ENCODE measurements at regions of chr5 and their contacts with region 1.

Region 1: DNA sequence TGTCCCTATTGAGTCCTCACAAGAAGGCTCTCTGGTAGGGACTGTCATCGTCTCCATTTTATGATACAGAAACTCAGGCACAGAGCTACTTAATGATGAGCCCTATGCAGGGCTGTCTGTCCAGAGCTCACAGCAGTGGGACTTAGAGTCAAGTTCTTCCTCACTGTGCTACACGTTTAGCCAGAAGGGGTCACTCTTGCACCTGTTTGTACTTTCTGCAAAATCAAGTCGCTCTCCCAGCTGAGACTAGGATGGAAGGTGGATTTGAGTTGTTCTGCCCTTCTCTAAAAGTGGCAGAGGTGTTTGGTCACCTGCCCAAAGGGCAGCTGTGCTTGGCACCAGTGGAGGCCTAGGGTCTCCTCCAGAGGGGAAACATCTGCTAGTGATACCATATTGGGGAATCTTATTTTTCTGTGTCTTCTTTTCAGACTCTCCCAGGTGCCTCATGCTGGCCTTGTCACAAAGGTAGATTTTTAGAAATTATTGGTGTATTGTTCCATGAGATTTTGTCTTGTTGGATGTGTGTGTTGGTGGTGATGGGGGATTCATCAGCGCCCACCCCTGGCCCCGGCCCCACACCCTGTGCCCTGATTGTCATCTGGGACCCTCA is 104.2 kb downstream of the PPARGC1B start:
- DNase-seq: peak; percentile 87 to 90
- ATAC-seq: peak; percentile 67 to 77
- H3K4me3 ChIP-seq: no peak overlapping the region
- H3K27ac ChIP-seq: no peak overlapping the region
- H3K4me1 ChIP-seq: peaks cover 16% of the 10 kb centered on the region
- CTCF ChIP-seq: peak; percentile 91
- EP300 ChIP-seq: no peak
- POLR2A ChIP-seq: no peak
- RAD21 ChIP-seq: peak; percentile 83 to 90

Region 2: GRCh38 chr5:149684371-149684770 is 150.0 kb before region 1 on chr5:
- CTCF ChIA-PET with region 1: no interaction called
- POLR2A ChIA-PET with region 1: no interaction called
- DNase-seq: no peak
- ATAC-seq: no peak
- H3K4me3 ChIP-seq: no peak overlapping the region
- H3K27ac ChIP-seq: no peak overlapping the region
- H3K4me1 ChIP-seq: no peaks in the 10 kb centered on the region
- CTCF ChIP-seq: no peak
- EP300 ChIP-seq: no peak
- POLR2A ChIP-seq: no peak
- RAD21 ChIP-seq: no peak

Region 3: GRCh38 chr5:149816661-149817060 is 17.7 kb before region 1 on chr5:
- CTCF ChIA-PET with region 1: interaction called, 768 read pairs
- POLR2A ChIA-PET with region 1: no interaction called
- DNase-seq: no peak
- ATAC-seq: no peak
- H3K4me3 ChIP-seq: no peak overlapping the region
- H3K27ac ChIP-seq: no peak overlapping the region
- H3K4me1 ChIP-seq: no peaks in the 10 kb centered on the region
- CTCF ChIP-seq: no peak
- EP300 ChIP-seq: no peak
- POLR2A ChIP-seq: no peak
- RAD21 ChIP-seq: no peak

Region 4: GRCh38 chr5:149887622-149888183 is 53.4 kb after region 1 on chr5:
- CTCF ChIA-PET with region 1: interaction called, 10 read pairs
- POLR2A ChIA-PET with region 1: no interaction called
- DNase-seq: peak in 1 of 2 experiments; percentile 53
- ATAC-seq: peak; percentile 67 to 84; a peak in 4 of 6 replicates
- H3K4me3 ChIP-seq: no peak overlapping the region
- H3K27ac ChIP-seq: peak overlapping the region; percentile 59 to 82
- H3K4me1 ChIP-seq: peaks cover 18% of the 10 kb centered on the region
- CTCF ChIP-seq: no peak
- EP300 ChIP-seq: no peak
- POLR2A ChIP-seq: no peak
- RAD21 ChIP-seq: no peak

Region 5: GRCh38 chr5:149938791-149939358 is 104.5 kb after region 1 on chr5:
- CTCF ChIA-PET with region 1: interaction called, 69 read pairs
- POLR2A ChIA-PET with region 1: no interaction called
- DNase-seq: peak; percentile 88 to 94
- ATAC-seq: peak; percentile 90 to 92
- H3K4me3 ChIP-seq: no peak overlapping the region
- H3K27ac ChIP-seq: peak overlapping the region; percentile 85 to 91
- H3K4me1 ChIP-seq: peaks cover 71% of the 10 kb centered on the region
- CTCF ChIP-seq: no peak
- EP300 ChIP-seq: peak; percentile 83 to 93
- POLR2A ChIP-seq: no peak
- RAD21 ChIP-seq: peak in 1 of 2 experiments; percentile 30; a peak in 1 of 5 replicates

Region 6: GRCh38 chr5:150000256-150000989 is 166.1 kb after region 1 on chr5 and contains the starts of genes HMGXB3 and TIGD6:
- CTCF ChIA-PET with region 1: interaction called, 507 read pairs
- POLR2A ChIA-PET with region 1: no interaction called
- DNase-seq: peak; percentile 89 to 95
- ATAC-seq: peak; percentile 91 to 95
- H3K4me3 ChIP-seq: peak within 1 kb of the TSS; percentile 96
- H3K27ac ChIP-seq: peak within 1 kb of the TSS; percentile 97
- H3K4me1 ChIP-seq: peaks cover 20% of the 10 kb centered on the region
- CTCF ChIP-seq: no peak
- EP300 ChIP-seq: no peak
- POLR2A ChIP-seq: peak; percentile 90
- RAD21 ChIP-seq: no peak
- polyA plus RNA-seq, gene HMGXB3: 34.1 and 37.2 TPM in 2 replicates
- polyA plus RNA-seq, gene TIGD6: 7.3 and 8.4 TPM in 2 replicates